Activated naive CD4-positive, alpha-beta T cell treated with anti-CD3 and anti-CD28 coated beads, Interleukin-2, amount 10 ng/mL, durations not matched to agents 7 days and 5 days (primary cell): ENCODE measurements at regions of chr2 and their contacts with region 1.

Region 1: GRCh38 chr2:147082850-147083522 is 761.8 kb upstream of the ACVR2A start:
- DNase-seq: peak; percentile 69
- H3K4me3 Mint-ChIP-seq: no peak overlapping the region
- H3K27ac Mint-ChIP-seq: no peak overlapping the region
- H3K4me1 Mint-ChIP-seq: peaks cover 14% of the 10 kb centered on the region
- H3K27me3 Mint-ChIP-seq: peaks cover 7% of the 10 kb centered on the region

Region 2: GRCh38 chr2:147008481-147008880 is 74.5 kb before region 1 on chr2:
- CTCF ChIA-PET with region 1: no interaction called
- DNase-seq: no peak
- H3K4me3 Mint-ChIP-seq: no peak overlapping the region
- H3K27ac Mint-ChIP-seq: no peak overlapping the region
- H3K4me1 Mint-ChIP-seq: no peaks in the 10 kb centered on the region
- H3K27me3 Mint-ChIP-seq: peaks cover 3% of the 10 kb centered on the region

Region 3: GRCh38 chr2:147045113-147045512 is 37.9 kb before region 1 on chr2:
- CTCF ChIA-PET with region 1: interaction called, 10 read pairs
- DNase-seq: peak; percentile 60
- H3K4me3 Mint-ChIP-seq: no peak overlapping the region
- H3K27ac Mint-ChIP-seq: no peak overlapping the region
- H3K4me1 Mint-ChIP-seq: peaks cover 3% of the 10 kb centered on the region
- H3K27me3 Mint-ChIP-seq: peaks cover 5% of the 10 kb centered on the region

Region 4: GRCh38 chr2:147068071-147068470 is 14.9 kb before region 1 on chr2:
- CTCF ChIA-PET with region 1: interaction called, 10 read pairs
- DNase-seq: no peak
- H3K4me3 Mint-ChIP-seq: no peak overlapping the region
- H3K27ac Mint-ChIP-seq: no peak overlapping the region
- H3K4me1 Mint-ChIP-seq: no peaks in the 10 kb centered on the region
- H3K27me3 Mint-ChIP-seq: peaks cover 3% of the 10 kb centered on the region

Region 5: DNA sequence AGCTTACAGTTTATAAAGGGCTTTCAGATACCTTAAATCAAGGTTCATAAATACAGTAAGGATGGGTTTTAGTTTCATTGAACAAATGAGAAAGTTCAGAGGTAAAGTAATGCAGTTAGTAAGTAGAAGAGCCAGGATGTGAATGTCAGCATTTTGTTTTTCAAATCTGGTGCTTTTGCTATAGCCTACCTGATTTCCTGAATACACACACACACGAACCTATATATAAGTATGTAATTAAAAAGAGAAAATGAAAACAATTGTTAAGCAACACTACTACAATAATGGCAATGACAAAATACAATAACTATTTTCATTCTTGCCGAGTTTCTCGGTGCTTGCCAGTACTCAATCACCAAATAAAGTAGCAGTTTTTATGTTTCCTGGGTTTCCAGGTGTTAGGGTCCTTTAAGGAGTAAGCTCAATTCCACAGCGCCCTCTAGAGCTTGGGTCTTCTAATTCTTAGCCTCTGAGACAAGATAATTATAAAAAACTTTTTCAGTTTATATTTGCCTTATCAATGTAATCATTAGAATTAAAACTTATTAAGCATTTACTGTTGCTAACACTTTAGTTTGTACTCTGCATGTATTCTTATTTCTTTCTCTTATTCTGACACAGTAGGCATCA is 248.9 kb after region 1 on chr2:
- CTCF ChIA-PET with region 1: interaction called, 18 read pairs
- DNase-seq: peak; percentile 67
- H3K4me3 Mint-ChIP-seq: no peak overlapping the region
- H3K27ac Mint-ChIP-seq: peak overlapping the region; percentile 63
- H3K4me1 Mint-ChIP-seq: peaks cover 35% of the 10 kb centered on the region
- H3K27me3 Mint-ChIP-seq: peaks cover 3% of the 10 kb centered on the region

Region 6: DNA sequence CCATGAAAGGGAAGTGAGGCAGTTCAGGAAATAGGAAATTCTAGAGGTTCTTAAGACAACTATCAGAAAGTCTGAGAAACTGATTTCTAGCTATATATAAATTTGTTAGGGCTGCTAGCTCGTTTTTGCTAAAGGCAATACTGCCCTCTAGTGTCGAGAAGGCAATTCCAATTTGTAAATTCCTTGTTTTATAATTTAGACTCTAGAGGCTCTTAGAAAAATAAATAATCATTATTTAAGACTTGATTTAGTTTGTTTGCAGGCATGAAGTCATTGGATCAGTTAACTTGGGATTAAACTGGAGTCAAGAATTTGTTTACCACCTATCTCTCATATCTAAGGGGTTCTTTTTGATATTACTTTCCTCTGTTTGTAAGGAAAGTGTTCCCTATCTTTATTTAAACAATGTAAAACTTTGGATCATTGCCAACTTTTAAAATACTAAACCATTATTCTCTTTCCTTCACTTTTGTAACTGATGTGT is 828.0 kb after region 1 on chr2:
- CTCF ChIA-PET with region 1: interaction called, 53 read pairs
- DNase-seq: peak; percentile 50
- H3K4me3 Mint-ChIP-seq: no peak overlapping the region
- H3K27ac Mint-ChIP-seq: no peak overlapping the region
- H3K4me1 Mint-ChIP-seq: peaks cover 12% of the 10 kb centered on the region
- H3K27me3 Mint-ChIP-seq: no peaks in the 10 kb centered on the region